GM12878 (cell line): ENCODE measurements at regions of chr13 and their contacts with region 1.

Region 1: DNA sequence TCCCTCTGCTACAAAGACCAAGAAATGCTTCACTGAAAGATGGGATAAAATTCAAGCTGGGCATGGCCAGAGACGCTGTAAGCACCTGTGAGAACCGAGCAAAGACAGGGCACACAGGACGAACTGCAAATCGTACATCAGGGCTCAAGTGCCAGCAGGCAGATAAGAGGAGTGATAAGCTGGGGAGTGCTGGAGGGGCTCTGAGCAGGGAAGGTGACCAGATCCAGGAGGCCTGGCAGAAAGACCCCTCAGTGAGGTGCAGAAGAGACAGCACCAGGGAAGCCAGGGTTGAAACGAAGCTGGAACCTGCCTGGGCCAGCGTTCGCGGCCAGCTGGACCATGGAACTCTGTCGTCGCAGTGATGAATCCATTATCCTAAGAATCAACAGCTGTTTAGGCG is 10.2 kb downstream of the RAB20 start:
- DNase-seq: no peak
- ATAC-seq: no peak
- H3K4me3 ChIP-seq: no peak overlapping the region
- H3K27ac ChIP-seq: no peak overlapping the region
- H3K4me1 ChIP-seq: no peaks in the 10 kb centered on the region; the same call in 1 of the 2 replicates
- H3K27me3 ChIP-seq: no peaks in the 10 kb centered on the region
- CTCF ChIP-seq: no peak
- EP300 ChIP-seq: no peak
- POLR2A ChIP-seq: no peak
- RAD21 ChIP-seq: no peak

Region 2: GRCh38 chr13:110538632-110539031 is 12.7 kb before region 1 on chr13:
- CTCF ChIA-PET with region 1: interaction called, 3 read pairs
- POLR2A ChIA-PET with region 1: interaction called, 6 read pairs
- RAD21 ChIA-PET with region 1: interaction called, 6 read pairs
- SMC1A ChIA-PET with region 1: interaction called, 12 read pairs
- in situ Hi-C with region 1: no loop called
- intact Hi-C with region 1: no loop called
- DNase-seq: no peak
- ATAC-seq: peak; percentile 70
- H3K4me3 ChIP-seq: no peak overlapping the region
- H3K27ac ChIP-seq: no peak overlapping the region
- H3K4me1 ChIP-seq: peaks cover 13% of the 10 kb centered on the region
- H3K27me3 ChIP-seq: no peaks in the 10 kb centered on the region
- CTCF ChIP-seq: no peak
- EP300 ChIP-seq: no peak
- POLR2A ChIP-seq: no peak
- RAD21 ChIP-seq: no peak

Region 3: GRCh38 chr13:110561344-110562035 is 10.2 kb after region 1 on chr13 and contains the start of gene RAB20:
- CTCF ChIA-PET with region 1: interaction called, 3 read pairs
- POLR2A ChIA-PET with region 1: interaction called, 8 read pairs
- RAD21 ChIA-PET with region 1: interaction called, 3 read pairs
- SMC1A ChIA-PET with region 1: interaction called, 11 read pairs
- in situ Hi-C with region 1: no loop called
- intact Hi-C with region 1: no loop called
- DNase-seq: no peak
- ATAC-seq: peak; percentile 75
- H3K4me3 ChIP-seq: peak within 1 kb of the TSS; percentile 91
- H3K27ac ChIP-seq: peak within 1 kb of the TSS; percentile 71
- H3K4me1 ChIP-seq: peaks cover 2% of the 10 kb centered on the region
- H3K27me3 ChIP-seq: no peaks in the 10 kb centered on the region
- CTCF ChIP-seq: no peak
- EP300 ChIP-seq: no peak
- POLR2A ChIP-seq: peak; percentile 61
- RAD21 ChIP-seq: peak; percentile 7; the same call in 1 of the 2 replicates
- polyA plus RNA-seq, gene RAB20: 0.48 to 2.1 TPM

Region 4: GRCh38 chr13:110676595-110677587 is 125.6 kb after region 1 on chr13:
- CTCF ChIA-PET with region 1: no interaction called
- POLR2A ChIA-PET with region 1: no interaction called
- RAD21 ChIA-PET with region 1: no interaction called
- SMC1A ChIA-PET with region 1: no interaction called
- in situ Hi-C with region 1: no loop called
- intact Hi-C with region 1: no loop called
- DNase-seq: peak; percentile 63
- ATAC-seq: peak; percentile 89
- H3K4me3 ChIP-seq: peak overlapping the region; percentile 24; the same call in 1 of the 2 replicates
- H3K27ac ChIP-seq: peak overlapping the region; percentile 86
- H3K4me1 ChIP-seq: peaks cover 16% of the 10 kb centered on the region
- H3K27me3 ChIP-seq: no peaks in the 10 kb centered on the region
- CTCF ChIP-seq: no peak
- EP300 ChIP-seq: no peak
- POLR2A ChIP-seq: 0 out of 2 replicates have a peak, but pooled peaks have one; percentile 16
- RAD21 ChIP-seq: no peak